AG04449 (cell line): ENCODE measurements at regions of chr1 and their contacts with region 1.

Region 1: GRCh38 chr1:175124861-175125260 is 57.2 kb downstream of the TNN start:
- DNase-seq: no peak
- H3K4me3 ChIP-seq: no peak overlapping the region
- CTCF ChIP-seq: no peak

Region 2: GRCh38 chr1:175023043-175023921 is 101.6 kb before region 1 on chr1 and contains the start of gene MRPS14:
- CTCF ChIA-PET with region 1: interaction called, 11 read pairs
- POLR2A ChIA-PET with region 1: no interaction called
- DNase-seq: peak; percentile 87
- H3K4me3 ChIP-seq: peak within 1 kb of the TSS; percentile 94
- CTCF ChIP-seq: no peak

Region 3: GRCh38 chr1:175035865-175036264 is 89.0 kb before region 1 on chr1:
- CTCF ChIA-PET with region 1: interaction called, 11 read pairs
- POLR2A ChIA-PET with region 1: no interaction called
- DNase-seq: no peak
- H3K4me3 ChIP-seq: no peak overlapping the region
- CTCF ChIP-seq: no peak

Region 4: DNA sequence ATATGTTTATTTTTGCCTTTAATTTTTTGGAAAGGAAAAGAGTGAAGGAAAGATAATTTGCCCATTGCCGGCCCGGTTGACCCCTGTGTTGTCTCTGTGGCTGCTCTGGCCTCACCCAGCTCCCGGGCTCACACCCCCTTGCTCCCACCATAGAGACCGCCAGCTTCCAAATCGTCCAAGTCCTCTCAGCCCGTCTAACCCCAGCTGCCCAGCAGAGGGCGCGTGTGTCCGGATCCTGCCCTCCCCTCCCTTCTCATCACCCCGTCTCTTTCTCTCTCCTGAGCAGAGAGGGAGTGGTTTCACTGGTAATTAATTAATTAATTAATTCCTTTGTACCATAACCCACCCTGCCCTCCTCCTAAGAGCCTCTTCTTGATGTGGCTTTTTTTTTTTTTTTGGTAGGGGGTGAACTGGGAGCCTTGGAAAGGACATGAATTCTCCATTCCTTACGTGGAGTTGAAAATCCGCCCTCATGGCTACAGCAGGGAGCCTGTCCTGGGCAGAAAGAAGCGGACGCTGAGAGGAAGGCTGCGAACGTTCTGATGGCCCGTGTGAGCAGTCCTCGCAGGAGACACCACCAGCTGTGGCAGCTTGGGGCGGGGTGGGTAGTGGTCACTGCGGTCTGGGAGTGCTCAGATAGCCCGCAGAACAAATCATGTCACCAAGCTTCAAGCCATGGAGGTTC is 21.8 kb after region 1 on chr1:
- CTCF ChIA-PET with region 1: interaction called, 20 read pairs
- POLR2A ChIA-PET with region 1: no interaction called
- DNase-seq: no peak
- H3K4me3 ChIP-seq: no peak overlapping the region
- CTCF ChIP-seq: peak; percentile 94